ENCODE measurements at regions of chr16 and their contacts with region 1.

Region 1: DNA sequence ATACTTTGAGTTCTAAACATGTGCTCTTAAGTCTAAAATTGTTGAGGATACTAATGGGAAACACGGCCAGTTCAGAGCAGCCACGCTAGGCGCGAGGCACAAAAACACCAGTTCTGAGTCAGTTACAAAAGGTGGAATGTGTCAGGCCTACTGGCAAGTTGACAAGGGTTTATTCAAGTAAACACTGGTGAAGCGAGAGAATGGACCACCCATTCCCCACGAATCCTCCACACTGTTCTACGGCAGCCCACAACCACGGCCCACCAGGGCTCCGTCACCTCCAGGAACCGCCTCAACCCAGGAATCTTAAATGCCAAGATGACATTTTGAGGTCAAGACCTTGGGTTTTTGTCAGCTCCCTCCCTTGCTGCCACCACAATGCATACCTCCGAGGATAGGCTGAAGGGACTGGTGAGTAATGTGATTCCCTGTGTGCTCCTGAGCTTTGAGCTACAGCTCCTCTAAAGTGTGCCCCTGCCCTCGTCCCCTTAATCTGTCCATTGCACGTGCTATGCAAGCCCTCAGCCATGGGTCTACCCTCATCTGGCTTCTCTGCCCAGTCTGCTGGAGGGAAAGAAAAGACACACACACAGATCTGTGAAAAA is 28.5 kb upstream of the TRAP1 start:
- DNase-seq: no peak
- H3K4me3 ChIP-seq: no peak overlapping the region
- H3K4me3 Mint-ChIP-seq: no peak overlapping the region
- H3K27ac ChIP-seq: peak overlapping the region in 1 of 2 donors; percentile 8
- H3K27ac Mint-ChIP-seq: peak overlapping the region in 1 of 7 donors; percentile 73
- H3K4me1 ChIP-seq: no peaks in the 10 kb centered on the region
- H3K4me1 Mint-ChIP-seq: no peaks in the 10 kb centered on the region
- H3K27me3 ChIP-seq: no peaks in the 10 kb centered on the region
- H3K27me3 Mint-ChIP-seq: no peaks in the 10 kb centered on the region
- CTCF ChIP-seq: no peak

Region 2: GRCh38 chr16:3656491-3657468 is 89.1 kb before region 1 on chr16:
- intact Hi-C with region 1: no loop called
- DNase-seq: no peak
- H3K4me3 ChIP-seq: no peak overlapping the region
- H3K4me3 Mint-ChIP-seq: no peak overlapping the region
- H3K27ac ChIP-seq: no peak overlapping the region
- H3K27ac Mint-ChIP-seq: no peak overlapping the region
- H3K4me1 ChIP-seq: no peaks in the 10 kb centered on the region
- H3K4me1 Mint-ChIP-seq: peaks cover 1% of the 10 kb centered on the region
- H3K27me3 ChIP-seq: no peaks in the 10 kb centered on the region
- H3K27me3 Mint-ChIP-seq: no peaks in the 10 kb centered on the region
- CTCF ChIP-seq: no peak

Region 3: GRCh38 chr16:3787924-3788661 is 42.2 kb after region 1 on chr16:
- intact Hi-C with region 1: no loop called
- DNase-seq: no peak
- H3K4me3 ChIP-seq: no peak overlapping the region
- H3K4me3 Mint-ChIP-seq: no peak overlapping the region
- H3K27ac ChIP-seq: no peak overlapping the region
- H3K27ac Mint-ChIP-seq: no peak overlapping the region
- H3K4me1 ChIP-seq: no peaks in the 10 kb centered on the region
- H3K4me1 Mint-ChIP-seq: peaks cover 6% of the 10 kb centered on the region
- H3K27me3 ChIP-seq: no peaks in the 10 kb centered on the region
- H3K27me3 Mint-ChIP-seq: peaks cover 0 to 4% (median 1%) of the 10 kb centered on the region in 3 donors
- CTCF ChIP-seq: no peak

Region 4: GRCh38 chr16:3807425-3808123 is 61.7 kb after region 1 on chr16:
- intact Hi-C with region 1: loop called in 1 of 2 experiments (anchors 10 kb)
- DNase-seq: no peak
- H3K4me3 ChIP-seq: no peak overlapping the region
- H3K4me3 Mint-ChIP-seq: no peak overlapping the region
- H3K27ac ChIP-seq: peak overlapping the region in 1 of 2 donors; percentile 40
- H3K27ac Mint-ChIP-seq: peak overlapping the region in 3 of 7 donors; percentile 4 to 58 (median 36)
- H3K4me1 ChIP-seq: peaks cover 4 to 7% of the 10 kb centered on the region in 2 donors
- H3K4me1 Mint-ChIP-seq: peaks cover 30% of the 10 kb centered on the region
- H3K27me3 ChIP-seq: no peaks in the 10 kb centered on the region
- H3K27me3 Mint-ChIP-seq: no peaks in the 10 kb centered on the region
- CTCF ChIP-seq: no peak

Region 5: DNA sequence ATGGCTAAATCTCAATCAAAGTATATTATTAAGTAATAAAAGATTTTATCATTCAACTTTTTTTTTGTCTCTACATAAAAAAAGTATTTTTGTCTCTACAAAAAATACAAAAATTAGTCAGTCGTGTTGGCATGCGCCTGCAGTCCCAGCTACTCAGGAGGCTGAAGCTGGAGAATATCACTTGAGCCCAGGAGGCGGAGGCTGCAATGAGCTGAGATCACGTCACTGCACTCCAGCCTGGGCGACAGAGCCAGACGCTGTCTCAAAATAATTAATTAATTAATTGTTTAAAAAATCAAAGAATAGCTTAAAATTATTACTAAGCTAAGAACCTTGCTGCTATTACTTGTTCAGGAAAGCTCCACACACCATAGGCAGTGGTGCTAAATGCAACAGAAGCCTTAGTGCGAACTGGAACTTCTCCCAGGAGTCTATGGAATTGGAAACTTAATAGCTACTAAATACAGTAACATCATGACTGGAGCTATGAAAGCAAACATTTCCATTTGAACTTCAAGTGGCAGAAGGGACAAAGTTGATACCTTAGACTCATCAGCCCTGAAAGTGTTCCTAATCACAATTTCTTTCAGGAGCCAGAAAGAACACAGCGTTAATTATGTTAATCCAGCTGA is 347.8 kb after region 1 on chr16:
- intact Hi-C with region 1: no loop called
- DNase-seq: no peak
- H3K4me3 ChIP-seq: no peak overlapping the region
- H3K4me3 Mint-ChIP-seq: no peak overlapping the region
- H3K27ac ChIP-seq: no peak overlapping the region
- H3K27ac Mint-ChIP-seq: no peak overlapping the region
- H3K4me1 ChIP-seq: peaks cover 35 to 36% of the 10 kb centered on the region in 2 donors
- H3K4me1 Mint-ChIP-seq: peaks cover 36% of the 10 kb centered on the region
- H3K27me3 ChIP-seq: no peaks in the 10 kb centered on the region
- H3K27me3 Mint-ChIP-seq: peaks cover 0 to 1% (median 0%) of the 10 kb centered on the region in 3 donors
- CTCF ChIP-seq: no peak